PC-9 (cell line): ENCODE measurements at regions of chr10 and their contacts with region 1.

Region 1: DNA sequence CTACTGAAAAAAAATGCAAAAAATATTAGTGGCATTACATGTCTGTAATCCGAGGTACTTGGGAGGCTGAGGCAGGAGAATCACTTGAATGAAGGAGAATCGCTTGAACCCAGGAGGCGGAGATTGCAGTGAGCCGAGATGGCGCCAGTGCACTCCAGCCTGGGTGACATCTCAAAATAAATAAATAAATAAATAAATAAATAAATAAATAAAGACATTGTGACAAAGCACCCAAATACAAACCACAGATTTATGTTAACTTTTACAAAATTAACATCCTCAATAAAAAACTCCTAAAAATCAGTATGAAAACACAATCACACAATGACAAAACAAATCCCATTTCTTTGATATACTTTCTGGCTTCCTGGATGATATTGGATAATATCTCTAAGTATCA is 808.3 kb downstream of the REEP3 start:
- DNase-seq: no peak
- H3K4me3 ChIP-seq: no peak overlapping the region
- H3K27ac ChIP-seq: no peak overlapping the region
- H3K4me1 ChIP-seq: no peaks in the 10 kb centered on the region; the same call in 1 of the 2 replicates
- H3K27me3 ChIP-seq: no peaks in the 10 kb centered on the region
- CTCF ChIP-seq: no peak

Region 2: DNA sequence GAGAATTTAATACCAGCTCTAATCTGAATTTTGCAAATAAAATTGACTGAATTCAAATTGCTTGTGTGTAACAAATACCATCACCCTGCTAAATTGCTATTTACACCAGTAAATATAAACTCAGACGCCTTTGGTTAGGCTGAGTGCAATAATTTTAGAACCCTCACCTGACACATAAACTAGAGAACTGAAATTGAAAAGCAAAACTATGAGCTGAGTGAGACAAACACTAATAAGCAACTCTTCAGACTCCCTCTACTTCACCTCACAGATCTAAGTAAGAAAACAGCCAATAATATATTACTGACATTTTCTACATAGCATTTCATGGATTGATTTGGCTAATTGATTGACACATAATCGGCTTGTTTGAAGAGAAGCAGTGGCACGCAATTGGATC is 187.1 kb before region 1 on chr10:
- CTCF ChIA-PET with region 1: no interaction called
- POLR2A ChIA-PET with region 1: no interaction called
- intact Hi-C with region 1: no loop called
- DNase-seq: no peak
- H3K4me3 ChIP-seq: no peak overlapping the region
- H3K27ac ChIP-seq: no peak overlapping the region
- H3K4me1 ChIP-seq: no peaks in the 10 kb centered on the region
- H3K27me3 ChIP-seq: no peaks in the 10 kb centered on the region
- CTCF ChIP-seq: no peak

Region 3: GRCh38 chr10:65620404-65621048 is 1291.0 kb after region 1 on chr10:
- CTCF ChIA-PET with region 1: no interaction called
- POLR2A ChIA-PET with region 1: no interaction called
- intact Hi-C with region 1: loop called (anchors 5 kb)
- DNase-seq: no peak
- H3K4me3 ChIP-seq: no peak overlapping the region
- H3K27ac ChIP-seq: no peak overlapping the region
- H3K4me1 ChIP-seq: peaks cover 5% of the 10 kb centered on the region; the same call in 1 of the 2 replicates
- H3K27me3 ChIP-seq: no peaks in the 10 kb centered on the region
- CTCF ChIP-seq: no peak